GM12878 (cell line): ENCODE measurements at regions of chr16 and their contacts with region 1.

Region 1: DNA sequence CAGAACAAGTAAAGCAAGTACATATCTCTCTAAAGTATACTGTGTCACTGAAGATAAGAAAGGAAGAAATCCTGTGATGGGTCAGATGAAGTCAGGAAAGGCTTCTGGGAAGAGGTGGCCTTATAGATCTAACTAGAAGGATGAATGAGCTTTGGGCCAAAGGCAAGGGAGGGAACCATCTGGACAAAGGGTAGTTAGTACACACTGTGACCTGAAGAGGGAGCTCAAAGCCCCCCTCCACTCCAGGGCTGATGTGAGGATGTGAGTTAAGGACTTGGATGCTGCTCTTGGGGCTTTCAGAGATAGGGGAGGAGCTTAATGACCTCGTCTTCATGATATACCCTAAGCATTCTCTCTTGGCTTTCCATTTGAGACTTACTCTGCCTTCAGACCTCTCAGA is 185.3 kb upstream of the CACNG3 start:
- DNase-seq: peak; percentile 9
- ATAC-seq: peak; percentile 82
- H3K4me3 ChIP-seq: no peak overlapping the region
- H3K27ac ChIP-seq: no peak overlapping the region
- H3K4me1 ChIP-seq: peaks cover 17% of the 10 kb centered on the region
- H3K27me3 ChIP-seq: no peaks in the 10 kb centered on the region
- CTCF ChIP-seq: peak; percentile 60 to 71 (median 62)
- EP300 ChIP-seq: no peak
- POLR2A ChIP-seq: no peak
- RAD21 ChIP-seq: peak; percentile 63

Region 2: DNA sequence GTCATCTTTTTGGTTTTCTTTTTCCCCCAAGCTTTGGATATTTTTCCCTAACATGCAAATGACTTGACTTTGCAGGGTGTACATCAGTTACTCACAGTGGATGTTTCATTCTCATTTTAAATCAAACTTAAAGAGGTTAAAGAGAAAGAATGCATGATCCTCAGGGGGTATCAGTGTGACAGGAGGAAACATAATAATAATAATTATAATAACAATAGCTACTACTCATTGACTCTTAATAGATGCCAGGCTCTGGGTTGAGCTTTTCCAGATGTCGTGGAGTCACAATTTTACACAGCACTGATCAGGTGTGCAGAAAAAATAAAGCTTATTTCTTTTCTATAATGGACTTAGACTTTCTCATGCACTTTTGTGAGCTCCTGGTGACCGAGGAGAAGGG is 28.0 kb after region 1 on chr16:
- CTCF ChIA-PET with region 1: interaction called, 14 read pairs
- POLR2A ChIA-PET with region 1: interaction called, 3 read pairs
- RAD21 ChIA-PET with region 1: interaction called, 3 read pairs
- SMC1A ChIA-PET with region 1: interaction called, 5 read pairs
- in situ Hi-C with region 1: no loop called
- intact Hi-C with region 1: no loop called
- DNase-seq: no peak
- ATAC-seq: no peak
- H3K4me3 ChIP-seq: no peak overlapping the region
- H3K27ac ChIP-seq: no peak overlapping the region
- H3K4me1 ChIP-seq: no peaks in the 10 kb centered on the region
- H3K27me3 ChIP-seq: no peaks in the 10 kb centered on the region
- CTCF ChIP-seq: no peak
- EP300 ChIP-seq: no peak
- POLR2A ChIP-seq: no peak
- RAD21 ChIP-seq: no peak